ENCODE measurements at regions of chr18 and their contacts with region 1.

Region 1: GRCh38 chr18:34867520-34867919 is 157.4 kb downstream of the DTNA start:
- DNase-seq: peak in 1 of 2 donors; percentile 74
- H3K4me3 ChIP-seq: peak overlapping the region in 1 of 2 donors; percentile 15
- H3K27ac ChIP-seq: peak overlapping the region; percentile 61 to 79
- H3K4me1 ChIP-seq: peaks cover 7 to 18% of the 10 kb centered on the region in 2 donors
- H3K27me3 ChIP-seq: no peaks in the 10 kb centered on the region
- CTCF ChIP-seq: peak in 2 of 3 experiments; percentile 14 to 30

Region 2: GRCh38 chr18:34767601-34768027 is 99.9 kb before region 1 on chr18:
- intact Hi-C with region 1: no loop called
- DNase-seq: no peak
- H3K4me3 ChIP-seq: no peak overlapping the region
- H3K27ac ChIP-seq: peak overlapping the region in 1 of 2 donors; percentile 6
- H3K4me1 ChIP-seq: peaks cover 0 to 5% of the 10 kb centered on the region in 2 donors
- H3K27me3 ChIP-seq: no peaks in the 10 kb centered on the region
- CTCF ChIP-seq: no peak

Region 3: GRCh38 chr18:34901299-34901698 is 33.8 kb after region 1 on chr18:
- intact Hi-C with region 1: loop called (anchors 1 kb)
- DNase-seq: no peak
- H3K4me3 ChIP-seq: no peak overlapping the region
- H3K27ac ChIP-seq: no peak overlapping the region
- H3K4me1 ChIP-seq: no peaks in the 10 kb centered on the region
- H3K27me3 ChIP-seq: no peaks in the 10 kb centered on the region
- CTCF ChIP-seq: peak; percentile 43 to 54 (median 53)

Region 4: GRCh38 chr18:35143622-35144596 is 276.4 kb after region 1 on chr18:
- intact Hi-C with region 1: loop called (anchors 2 kb)
- DNase-seq: no peak
- H3K4me3 ChIP-seq: no peak overlapping the region
- H3K27ac ChIP-seq: no peak overlapping the region
- H3K4me1 ChIP-seq: no peaks in the 10 kb centered on the region
- H3K27me3 ChIP-seq: no peaks in the 10 kb centered on the region
- CTCF ChIP-seq: peak; percentile 65 to 82 (median 74)

Measured in ascending aorta (tissue), 2 donors.